OCI-LY7 (cell line): ENCODE measurements at regions of chr7 and their contacts with region 1.

Region 1: DNA sequence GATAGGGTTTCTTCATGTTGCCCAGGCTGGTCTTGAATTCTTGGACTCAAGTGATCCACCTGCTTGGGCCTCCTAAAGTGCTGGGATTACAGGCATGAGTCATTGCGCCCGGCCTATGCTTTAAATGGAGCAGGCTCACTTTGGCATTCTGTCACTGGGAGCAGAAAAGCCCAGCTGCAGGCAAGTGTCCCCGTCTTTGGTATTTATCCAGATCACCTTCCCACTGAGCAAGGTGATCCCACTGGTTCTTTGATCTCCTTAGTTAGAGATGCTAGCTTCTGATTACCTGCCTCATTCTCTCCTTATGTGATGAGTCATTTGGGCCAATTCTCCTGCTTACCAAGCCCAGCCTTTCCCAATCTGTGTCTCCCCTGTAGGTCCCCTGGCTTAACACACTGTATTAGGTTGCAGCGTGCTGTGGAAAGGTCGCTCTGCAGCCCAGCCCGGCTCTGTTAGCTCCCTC is 39.3 kb downstream of the SPDYE5 start:
- DNase-seq: no peak
- H3K4me3 ChIP-seq: no peak overlapping the region
- H3K27ac ChIP-seq: no peak overlapping the region
- H3K4me1 ChIP-seq: peaks cover 11% of the 10 kb centered on the region
- CTCF ChIP-seq: no peak

Region 2: DNA sequence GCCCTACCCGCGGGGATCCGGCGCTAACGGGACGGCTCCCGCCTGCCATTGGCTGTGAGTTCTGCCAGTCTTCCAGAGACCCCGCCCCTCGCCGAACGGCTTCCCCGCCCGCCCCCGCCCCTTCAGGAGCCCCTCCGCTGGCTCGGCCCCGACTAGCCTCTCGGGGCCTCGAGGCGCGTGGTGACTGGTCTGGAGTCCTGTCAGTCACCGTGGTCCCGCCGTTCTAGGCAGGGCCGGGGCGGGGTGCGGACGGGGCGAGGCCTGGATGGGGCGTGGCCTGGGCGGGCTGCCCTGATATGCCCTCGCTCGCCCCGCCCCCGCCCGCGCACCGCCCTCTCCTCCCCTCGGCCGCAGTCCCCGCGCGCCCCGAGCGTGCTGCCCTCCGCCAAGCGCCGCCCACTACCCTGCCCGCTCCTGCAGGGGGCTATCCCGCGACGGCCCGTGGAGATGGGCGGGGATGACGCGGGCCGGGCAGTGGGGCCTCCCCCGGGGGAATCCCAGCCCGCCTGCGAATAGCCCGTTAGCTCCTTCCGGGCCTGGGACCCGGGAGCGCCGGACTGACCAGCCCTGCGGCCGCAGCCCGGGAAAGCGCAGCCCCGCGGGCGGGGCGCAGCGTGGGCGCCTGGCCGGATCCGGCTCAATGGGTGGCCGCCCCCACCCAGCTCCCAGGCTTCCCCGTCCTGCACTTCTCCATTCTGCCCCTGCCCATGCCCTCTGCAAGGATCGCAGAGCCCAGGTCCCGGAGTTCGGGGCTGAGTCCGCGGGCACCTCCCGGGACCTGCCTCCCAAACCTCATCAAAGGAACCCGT is 207.8 kb after region 1 on chr7:
- CTCF ChIA-PET with region 1: no interaction called
- POLR2A ChIA-PET with region 1: interaction called, 3 read pairs
- intact Hi-C with region 1: loop called (anchors 10 kb)
- DNase-seq: peak; percentile 99
- H3K4me3 ChIP-seq: peak overlapping the region; percentile 82
- H3K27ac ChIP-seq: peak overlapping the region; percentile 90
- H3K4me1 ChIP-seq: peaks cover 63% of the 10 kb centered on the region
- CTCF ChIP-seq: no peak

Region 3: DNA sequence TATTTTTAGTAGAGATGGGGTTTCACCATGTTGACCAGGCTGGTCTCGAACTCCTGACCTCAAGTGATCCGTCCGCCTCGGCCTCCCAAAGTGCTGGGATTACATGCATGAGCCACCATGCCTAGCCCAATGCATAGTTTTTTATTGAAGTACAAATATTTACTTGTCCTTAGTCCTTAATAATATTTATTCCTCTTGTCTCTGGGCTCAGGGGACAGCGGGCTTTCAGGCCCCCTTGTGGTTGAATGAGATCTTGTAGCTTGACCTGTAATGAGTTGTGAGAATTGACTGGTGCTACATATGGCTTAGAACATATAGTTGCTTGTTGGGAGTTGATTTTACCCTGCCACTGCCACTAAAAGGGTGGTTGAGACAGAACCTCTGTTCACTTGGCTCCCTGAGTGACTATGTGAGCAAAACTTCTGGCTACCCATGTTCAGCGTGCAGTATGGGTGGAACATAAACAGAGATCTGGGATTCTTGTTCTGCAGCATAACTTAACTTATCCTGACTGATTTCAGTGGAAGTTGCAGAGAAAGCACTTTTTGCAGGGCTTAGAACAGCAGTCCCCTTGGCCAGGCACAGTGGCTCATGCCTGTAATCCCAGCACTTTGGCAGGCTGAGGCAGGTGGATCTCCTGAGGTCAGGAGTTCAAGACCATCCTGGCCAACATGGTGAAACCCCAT is 225.7 kb after region 1 on chr7:
- CTCF ChIA-PET with region 1: no interaction called
- POLR2A ChIA-PET with region 1: no interaction called
- intact Hi-C with region 1: loop called (anchors 5 kb)
- DNase-seq: peak; percentile 62
- H3K4me3 ChIP-seq: no peak overlapping the region
- H3K27ac ChIP-seq: no peak overlapping the region
- H3K4me1 ChIP-seq: peaks cover 15% of the 10 kb centered on the region
- CTCF ChIP-seq: peak; percentile 73